ENCODE measurements at regions of chr2 and their contacts with region 1.

Region 1: DNA sequence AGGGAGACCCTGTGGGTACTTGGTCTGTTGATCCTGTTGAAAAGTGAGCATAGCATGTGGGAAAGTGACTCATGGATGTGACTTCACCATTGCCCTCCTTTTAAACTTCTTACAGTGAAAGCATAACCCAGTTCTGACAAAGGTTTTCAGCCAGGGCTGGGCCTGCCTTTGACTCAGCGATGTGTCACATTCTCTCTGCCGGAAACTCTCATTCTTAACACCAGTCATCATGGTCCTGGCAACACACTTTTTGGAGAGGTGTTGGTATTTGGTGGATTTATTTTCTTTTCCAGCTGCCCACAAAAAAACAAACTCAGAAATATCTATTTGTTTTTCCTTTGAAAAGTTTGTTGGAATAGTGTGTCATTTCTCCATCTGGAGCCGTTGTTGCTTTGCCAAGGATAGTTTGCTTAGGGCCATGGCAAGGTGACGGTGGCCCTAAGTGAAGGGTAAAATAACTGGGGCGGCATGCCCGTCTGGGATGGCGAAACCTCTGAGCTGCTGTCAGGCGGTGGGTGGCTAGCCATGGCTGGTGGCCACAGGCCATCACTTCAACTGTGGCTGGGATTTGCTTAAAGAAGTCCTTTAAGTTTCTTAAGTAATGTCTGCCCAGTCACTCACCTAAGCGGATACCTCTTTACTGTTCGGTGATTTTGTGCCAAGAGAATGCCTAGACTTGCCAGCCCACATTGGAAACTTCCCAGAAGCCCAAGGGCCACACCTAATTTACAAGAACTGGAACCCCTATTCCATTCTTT is 123.3 kb downstream of the LTBP1 start:
- DNase-seq: peak; percentile 91
- H3K4me3 ChIP-seq: no peak overlapping the region
- H3K27ac ChIP-seq: peak overlapping the region; percentile 88
- H3K27me3 ChIP-seq: no peaks in the 10 kb centered on the region
- CTCF ChIP-seq: no peak

Region 2: GRCh38 chr2:32926708-32927084 is 143.4 kb before region 1 on chr2:
- CTCF ChIA-PET with region 1: no interaction called
- POLR2A ChIA-PET with region 1: no interaction called
- DNase-seq: peak; percentile 72
- H3K4me3 ChIP-seq: no peak overlapping the region
- H3K27ac ChIP-seq: no peak overlapping the region
- H3K27me3 ChIP-seq: no peaks in the 10 kb centered on the region
- CTCF ChIP-seq: no peak

Region 3: GRCh38 chr2:33059471-33060156 is 10.5 kb before region 1 on chr2:
- CTCF ChIA-PET with region 1: no interaction called
- POLR2A ChIA-PET with region 1: no interaction called
- DNase-seq: no peak
- H3K4me3 ChIP-seq: no peak overlapping the region
- H3K27ac ChIP-seq: no peak overlapping the region
- H3K27me3 ChIP-seq: no peaks in the 10 kb centered on the region
- CTCF ChIP-seq: no peak

Region 4: DNA sequence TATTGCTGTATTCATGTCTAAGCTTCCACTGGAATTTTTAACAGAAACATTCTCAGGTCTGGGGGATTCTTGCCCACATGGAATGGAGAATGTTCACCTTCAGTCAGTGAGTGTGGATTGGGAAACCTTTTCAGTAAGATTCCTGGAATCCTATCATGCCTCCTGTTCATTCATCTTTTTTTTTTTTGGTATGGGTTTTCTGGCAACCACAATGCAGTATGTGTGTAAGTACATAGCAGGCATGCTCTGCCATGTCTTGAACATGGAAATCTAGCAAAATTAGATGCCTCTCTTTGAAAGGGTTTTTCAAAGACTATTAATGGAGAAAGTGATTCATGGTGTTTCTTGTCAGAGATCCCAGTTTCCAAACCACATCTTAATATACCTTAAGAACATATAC is 53.1 kb after region 1 on chr2:
- CTCF ChIA-PET with region 1: no interaction called
- POLR2A ChIA-PET with region 1: interaction called, 12 read pairs
- DNase-seq: no peak
- H3K4me3 ChIP-seq: no peak overlapping the region
- H3K27ac ChIP-seq: no peak overlapping the region
- H3K27me3 ChIP-seq: no peaks in the 10 kb centered on the region
- CTCF ChIP-seq: no peak